ENCODE measurements at regions of chr1 and their contacts with region 1.

Region 1: DNA sequence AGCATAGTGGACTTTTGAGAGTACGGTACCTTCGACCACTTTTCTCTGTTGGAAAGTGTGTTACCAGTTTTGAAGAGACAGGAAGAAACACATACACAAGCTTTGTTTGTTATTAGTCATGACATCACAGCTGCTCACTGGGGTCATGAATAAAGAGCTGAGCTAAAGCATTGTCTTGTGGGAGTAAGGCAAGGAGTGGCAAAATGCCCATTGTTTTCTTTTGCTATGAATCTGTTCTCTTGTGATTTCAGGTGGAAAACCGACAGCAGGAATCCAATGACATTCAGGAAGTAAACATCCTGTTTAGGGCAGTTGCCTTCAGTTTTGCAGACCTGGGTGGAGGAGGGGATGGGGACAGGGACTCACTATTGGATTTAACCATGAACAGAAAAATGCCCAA is 66.2 kb downstream of the RGL1 start:
- DNase-seq: no peak
- H3K4me3 ChIP-seq: no peak overlapping the region
- H3K4me3 Mint-ChIP-seq: no peak overlapping the region
- H3K27ac Mint-ChIP-seq: no peak overlapping the region
- H3K4me1 ChIP-seq: no peaks in the 10 kb centered on the region; the same call in 1 of the 2 replicates
- H3K4me1 Mint-ChIP-seq: peaks cover 10% of the 10 kb centered on the region
- H3K27me3 ChIP-seq: no peaks in the 10 kb centered on the region
- H3K27me3 Mint-ChIP-seq: no peaks in the 10 kb centered on the region
- CTCF ChIP-seq: no peak

Region 2: GRCh38 chr1:183859831-183860230 is 11.3 kb before region 1 on chr1:
- CTCF ChIA-PET with region 1: no interaction called
- POLR2A ChIA-PET with region 1: no interaction called
- intact Hi-C with region 1: loop called (anchors 1 kb)
- DNase-seq: no peak
- H3K4me3 ChIP-seq: no peak overlapping the region
- H3K4me3 Mint-ChIP-seq: no peak overlapping the region
- H3K27ac Mint-ChIP-seq: peak overlapping the region; percentile 26
- H3K4me1 ChIP-seq: peaks cover 33% of the 10 kb centered on the region
- H3K4me1 Mint-ChIP-seq: peaks cover 48% of the 10 kb centered on the region
- H3K27me3 ChIP-seq: no peaks in the 10 kb centered on the region
- H3K27me3 Mint-ChIP-seq: no peaks in the 10 kb centered on the region
- CTCF ChIP-seq: no peak

Region 3: GRCh38 chr1:184025242-184025675 is 154.1 kb after region 1 on chr1:
- CTCF ChIA-PET with region 1: no interaction called
- POLR2A ChIA-PET with region 1: no interaction called
- intact Hi-C with region 1: no loop called
- DNase-seq: no peak
- H3K4me3 ChIP-seq: no peak overlapping the region
- H3K4me3 Mint-ChIP-seq: no peak overlapping the region
- H3K27ac Mint-ChIP-seq: no peak overlapping the region
- H3K4me1 ChIP-seq: peaks cover 6% of the 10 kb centered on the region; the same call in 1 of the 2 replicates
- H3K4me1 Mint-ChIP-seq: peaks cover 5% of the 10 kb centered on the region
- H3K27me3 ChIP-seq: no peaks in the 10 kb centered on the region
- H3K27me3 Mint-ChIP-seq: no peaks in the 10 kb centered on the region
- CTCF ChIP-seq: no peak

Measured in Caco-2 (cell line).